Activated naive CD4-positive, alpha-beta T cell treated with anti-CD3 and anti-CD28 coated beads for 36 hours (primary cell): ENCODE measurements at regions of chr6 and their contacts with region 1.

Region 1: DNA sequence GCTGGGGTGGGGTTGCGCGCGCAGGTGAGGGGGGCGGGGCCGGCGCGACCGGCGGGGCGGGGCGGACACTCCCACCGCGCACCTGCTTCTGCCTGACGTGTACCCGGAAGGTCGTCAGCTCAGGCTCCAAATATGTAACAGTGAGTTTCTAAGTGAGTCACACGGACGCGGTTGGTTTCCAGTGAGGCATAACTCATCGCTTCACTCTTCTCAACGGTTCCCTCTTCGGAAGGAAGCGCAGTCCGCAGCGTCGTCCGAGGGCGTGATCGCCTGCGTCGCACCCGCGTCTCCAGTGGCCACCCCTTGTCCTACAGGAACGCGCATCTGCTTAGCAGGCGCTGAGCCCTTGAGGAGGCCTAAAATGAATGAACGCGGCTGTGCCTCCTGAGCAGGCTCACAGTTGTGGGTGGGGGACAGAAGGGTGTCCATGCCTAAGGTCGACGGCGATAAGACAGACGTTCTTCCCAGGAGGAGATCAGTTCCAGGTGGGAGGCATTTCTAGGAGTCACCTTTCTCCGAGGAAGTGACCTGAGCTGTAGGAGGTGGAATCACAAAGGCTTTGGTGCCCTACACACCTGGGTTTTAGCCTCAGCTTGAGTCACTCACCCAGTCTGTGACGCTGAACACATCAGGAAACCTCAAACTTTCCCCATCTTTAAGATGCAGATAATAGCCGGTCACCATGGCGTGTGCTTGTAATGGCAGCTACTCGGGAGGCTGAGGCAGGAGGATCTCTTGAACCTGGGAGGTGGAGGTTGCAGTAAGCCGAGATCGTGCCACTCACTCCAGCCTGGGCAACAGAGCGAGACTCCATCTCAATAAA is 50.9 kb upstream of the EZR start:
- DNase-seq: peak; percentile 96
- H3K4me3 Mint-ChIP-seq: peak overlapping the region; percentile 88
- H3K27ac Mint-ChIP-seq: peak overlapping the region; percentile 99
- H3K4me1 Mint-ChIP-seq: peaks cover 35% of the 10 kb centered on the region
- H3K27me3 Mint-ChIP-seq: no peaks in the 10 kb centered on the region

Region 2: DNA sequence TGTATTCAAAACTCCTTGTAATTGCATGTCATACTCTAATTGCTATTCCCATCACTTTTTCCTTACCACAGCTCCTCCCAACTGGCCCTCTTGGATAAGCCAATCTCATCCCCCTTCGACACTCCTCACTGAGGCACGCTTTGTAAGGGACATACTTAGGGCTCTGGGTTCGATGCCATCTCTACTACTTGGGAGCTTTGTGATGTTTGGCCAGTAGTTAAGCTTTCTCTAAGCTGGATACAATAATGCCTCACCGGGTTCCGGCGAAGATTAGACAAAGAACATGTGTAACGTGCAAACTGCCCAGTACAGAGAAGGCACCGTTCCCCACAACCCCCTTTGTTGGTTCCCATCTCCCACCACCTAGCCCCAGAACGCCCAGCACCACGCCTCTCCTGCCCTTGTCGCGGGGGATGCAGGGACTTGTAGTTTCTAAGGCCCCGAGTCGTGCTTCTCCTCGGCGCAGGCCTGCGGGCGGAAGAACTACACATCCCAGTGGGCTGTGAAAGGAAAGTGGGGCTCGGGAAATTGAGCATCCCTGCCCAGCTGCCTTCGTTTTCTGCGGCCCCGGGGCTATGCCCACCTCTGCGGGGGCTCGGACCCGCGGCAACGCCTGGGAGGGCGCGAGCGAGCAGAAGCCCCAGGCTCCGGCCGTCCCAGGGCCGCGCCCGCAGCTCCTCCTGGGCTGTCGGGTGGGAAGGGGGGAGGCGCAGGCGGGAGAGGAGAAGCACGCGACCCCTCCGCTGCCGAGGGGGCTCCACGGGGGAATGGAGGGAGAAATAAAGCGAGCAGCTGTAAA is 1490.2 kb before region 1 on chr6:
- CTCF ChIA-PET with region 1: no interaction called
- intact Hi-C with region 1: loop called (anchors 10 kb)
- DNase-seq: peak; percentile 92
- H3K4me3 Mint-ChIP-seq: peak overlapping the region; percentile 81
- H3K27ac Mint-ChIP-seq: peak overlapping the region; percentile 59
- H3K4me1 Mint-ChIP-seq: peaks cover 36% of the 10 kb centered on the region
- H3K27me3 Mint-ChIP-seq: peaks cover 12% of the 10 kb centered on the region

Region 3: DNA sequence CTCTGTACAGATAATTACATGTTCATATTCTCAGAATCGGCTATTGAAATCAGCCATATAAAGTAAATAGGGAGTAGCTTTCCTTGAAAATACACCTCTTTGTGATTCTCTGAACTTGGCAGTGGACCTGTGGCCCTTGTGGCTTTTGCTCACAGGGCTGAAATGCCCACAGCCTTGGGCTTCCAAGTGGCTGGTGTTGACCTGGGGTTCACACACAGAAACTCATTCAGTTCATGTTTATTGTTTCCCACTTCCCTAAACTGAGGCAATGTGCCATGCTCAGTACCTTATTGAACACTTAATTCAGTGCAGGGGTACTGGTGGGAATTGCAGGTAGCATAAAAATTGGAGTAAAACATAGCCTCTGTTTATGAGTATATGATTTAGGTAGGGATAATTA is 576.9 kb before region 1 on chr6:
- CTCF ChIA-PET with region 1: no interaction called
- intact Hi-C with region 1: no loop called
- DNase-seq: no peak
- H3K4me3 Mint-ChIP-seq: no peak overlapping the region
- H3K27ac Mint-ChIP-seq: no peak overlapping the region
- H3K4me1 Mint-ChIP-seq: peaks cover 21% of the 10 kb centered on the region
- H3K27me3 Mint-ChIP-seq: no peaks in the 10 kb centered on the region

Region 4: DNA sequence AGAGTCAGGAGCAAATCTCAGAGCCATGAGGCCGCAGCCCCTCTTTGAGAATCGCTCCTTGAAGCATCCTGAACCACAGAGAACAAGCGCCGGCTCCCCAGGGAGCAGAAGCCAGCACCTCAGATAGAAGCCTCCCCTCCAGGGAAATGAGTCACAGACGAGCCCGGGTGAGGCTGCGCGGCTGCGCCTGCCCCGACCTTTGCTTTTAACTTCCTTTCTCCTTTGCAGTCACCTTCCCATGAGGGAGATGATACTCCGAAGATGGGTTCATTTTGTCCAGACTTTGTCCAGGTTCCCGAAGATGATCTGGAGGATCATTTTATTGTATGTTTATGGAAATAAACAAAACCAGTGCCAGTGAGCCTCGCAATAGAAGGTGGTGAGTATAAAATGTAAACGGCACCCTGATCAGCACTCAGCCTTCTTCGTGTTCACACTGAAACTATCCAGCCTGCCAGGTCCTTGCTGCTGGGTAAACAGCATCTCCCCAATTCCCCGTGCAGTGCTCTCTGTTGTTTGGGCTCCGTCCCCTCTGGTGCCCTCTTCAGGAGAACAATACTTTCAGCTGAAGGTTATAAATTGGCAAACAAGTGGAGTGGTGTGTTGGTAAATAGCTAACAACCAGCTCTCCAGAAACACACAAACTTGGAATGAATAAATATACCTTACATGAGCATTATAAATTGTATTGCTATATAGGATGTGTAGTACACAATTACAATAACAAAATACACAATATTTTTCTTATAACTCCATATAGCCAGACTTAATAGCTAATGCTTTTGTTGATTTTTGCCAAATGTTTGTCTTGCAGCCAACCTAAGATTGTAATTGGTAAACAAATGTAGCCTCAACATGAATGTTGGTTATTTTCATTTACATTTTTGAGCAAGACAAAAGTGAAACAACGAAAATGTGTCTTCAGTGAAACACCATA is 351.6 kb before region 1 on chr6:
- CTCF ChIA-PET with region 1: no interaction called
- intact Hi-C with region 1: no loop called
- DNase-seq: peak; percentile 76
- H3K4me3 Mint-ChIP-seq: peak overlapping the region; percentile 79
- H3K27ac Mint-ChIP-seq: peak overlapping the region; percentile 79
- H3K4me1 Mint-ChIP-seq: peaks cover 38% of the 10 kb centered on the region
- H3K27me3 Mint-ChIP-seq: peaks cover 16% of the 10 kb centered on the region

Region 5: DNA sequence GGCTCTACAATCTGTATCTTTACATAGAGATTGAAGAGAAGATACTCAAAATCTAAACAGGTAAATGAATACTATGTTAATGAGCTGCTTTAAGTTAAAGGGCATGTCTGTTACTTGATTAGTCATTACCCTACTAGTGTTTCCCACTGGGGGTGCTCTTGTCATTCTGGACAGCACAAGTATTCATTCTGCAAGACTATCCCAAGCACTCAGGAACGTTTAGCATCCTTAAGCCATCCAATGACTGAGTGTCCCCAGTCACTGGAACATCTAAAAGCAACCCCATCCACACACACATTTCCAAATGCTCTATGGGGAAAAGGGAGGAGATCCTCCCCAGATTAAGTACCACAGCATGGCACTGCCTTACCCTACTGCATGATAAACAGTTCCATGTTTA is 76.6 kb before region 1 on chr6:
- CTCF ChIA-PET with region 1: interaction called, 3 read pairs
- intact Hi-C with region 1: loop called (anchors 2 kb)
- DNase-seq: peak; percentile 43
- H3K4me3 Mint-ChIP-seq: no peak overlapping the region
- H3K27ac Mint-ChIP-seq: peak overlapping the region; percentile 24
- H3K4me1 Mint-ChIP-seq: peaks cover 88% of the 10 kb centered on the region
- H3K27me3 Mint-ChIP-seq: no peaks in the 10 kb centered on the region

Region 6: GRCh38 chr6:158910484-158911348 is 40.7 kb after region 1 on chr6:
- CTCF ChIA-PET with region 1: interaction called, 7 read pairs
- intact Hi-C with region 1: loop called (anchors 2 kb)
- DNase-seq: peak; percentile 22
- H3K4me3 Mint-ChIP-seq: peak overlapping the region; percentile 57
- H3K27ac Mint-ChIP-seq: peak overlapping the region; percentile 57
- H3K4me1 Mint-ChIP-seq: peaks cover 35% of the 10 kb centered on the region
- H3K27me3 Mint-ChIP-seq: no peaks in the 10 kb centered on the region

Region 7: GRCh38 chr6:159056003-159056402 is 186.0 kb after region 1 on chr6:
- CTCF ChIA-PET with region 1: no interaction called
- intact Hi-C with region 1: loop called (anchors 1 kb)
- DNase-seq: peak; percentile 41
- H3K4me3 Mint-ChIP-seq: peak overlapping the region; percentile 22
- H3K27ac Mint-ChIP-seq: peak overlapping the region; percentile 91
- H3K4me1 Mint-ChIP-seq: peaks cover 60% of the 10 kb centered on the region
- H3K27me3 Mint-ChIP-seq: no peaks in the 10 kb centered on the region